Posterior vena cava (tissue), 2 donors: ENCODE measurements at regions of chr1 and their contacts with region 1.

Region 1: DNA sequence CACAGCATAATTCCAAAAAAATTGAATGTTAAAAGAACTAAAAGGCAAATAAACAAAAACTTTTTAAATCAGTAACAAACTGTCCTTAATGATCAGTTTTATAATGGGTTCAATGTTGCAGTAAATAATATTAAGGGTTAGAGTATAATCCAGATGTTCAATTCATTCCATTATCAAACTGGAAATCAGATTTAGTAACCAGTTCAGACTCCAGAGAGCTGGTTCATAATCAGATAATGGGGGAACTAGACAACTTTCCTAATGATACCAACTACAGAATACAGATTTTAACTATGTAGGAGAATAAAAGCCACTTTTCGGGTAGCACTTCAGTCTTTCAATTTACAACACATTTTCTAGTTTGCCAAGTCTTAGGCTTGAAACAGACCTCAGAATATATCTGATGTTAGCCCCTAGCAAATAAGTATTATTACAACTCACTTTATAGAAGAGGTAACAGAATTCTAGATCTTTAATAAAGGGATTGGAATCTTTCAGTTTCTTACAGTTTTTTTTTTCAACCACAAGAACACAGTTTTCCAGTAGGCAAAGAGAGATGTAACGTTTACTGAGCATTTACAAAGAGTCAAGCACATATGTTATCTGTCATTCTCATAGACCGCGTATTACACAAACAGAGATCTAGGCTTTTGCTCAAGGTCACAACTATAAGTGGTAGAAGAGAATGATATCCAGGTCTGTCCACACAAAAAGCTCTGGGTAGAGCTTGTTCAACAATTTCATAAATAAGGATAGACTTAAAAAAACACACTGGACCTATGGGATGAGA is 1.9 kb upstream of the DCAF6 start:
- DNase-seq: no peak

Region 2: DNA sequence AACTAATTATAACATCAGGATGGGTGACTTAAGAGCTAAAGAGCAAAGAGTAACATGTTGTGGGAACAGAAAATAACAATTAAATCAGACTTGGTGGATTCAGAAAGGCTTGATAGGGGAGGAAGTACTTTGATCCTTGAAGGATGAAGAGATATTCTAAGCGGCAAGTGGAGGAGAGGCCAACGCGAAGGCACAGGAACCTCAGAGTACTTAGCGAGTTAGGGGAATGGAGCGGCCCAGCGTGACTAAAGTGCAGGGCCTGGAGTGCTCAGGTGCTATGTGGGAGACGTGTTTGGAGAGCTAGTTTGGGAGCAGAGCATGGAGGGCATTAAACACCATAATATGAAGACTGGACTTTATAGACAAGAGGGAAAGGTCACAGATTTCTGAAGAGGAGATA is 85.0 kb before region 1 on chr1:
- intact Hi-C with region 1: loop called in 1 of 2 experiments (anchors 5 kb)
- DNase-seq: no peak

Region 3: DNA sequence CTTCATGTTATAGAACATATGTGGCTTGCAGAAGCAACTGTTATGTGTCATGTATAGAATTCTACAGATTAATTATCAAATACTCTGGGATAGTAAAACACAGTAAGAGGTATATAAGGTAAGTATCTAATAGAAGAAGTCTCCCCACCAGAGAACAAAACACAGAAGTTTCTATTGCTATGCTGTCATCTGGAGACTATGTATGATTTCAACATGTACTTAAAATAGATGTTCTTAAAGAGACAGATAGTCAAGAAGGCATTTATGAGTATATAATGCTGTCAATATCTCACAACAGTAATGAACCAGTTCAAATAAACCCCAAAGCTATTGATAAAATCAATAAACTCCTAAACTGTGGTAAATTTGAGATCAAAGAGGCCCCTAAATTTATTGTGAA is 12.6 kb before region 1 on chr1:
- intact Hi-C with region 1: no loop called
- DNase-seq: no peak